ENCODE measurements at regions of chr7 and their contacts with region 1.

Region 1: GRCh38 chr7:47833211-47833610 is 115.1 kb downstream of the PKD1L1 start:
- DNase-seq: peak in 1 of 2 experiments; percentile 33
- H3K4me3 ChIP-seq: no peak overlapping the region
- H3K27ac ChIP-seq: no peak overlapping the region
- H3K4me1 ChIP-seq: no peaks in the 10 kb centered on the region; a peak in 1 of 7 replicates
- H3K27me3 ChIP-seq: no peaks in the 10 kb centered on the region; a peak in 1 of 7 replicates
- CTCF ChIP-seq: no peak
- EP300 ChIP-seq: no peak
- POLR2A ChIP-seq: no peak
- RAD21 ChIP-seq: no peak

Region 2: DNA sequence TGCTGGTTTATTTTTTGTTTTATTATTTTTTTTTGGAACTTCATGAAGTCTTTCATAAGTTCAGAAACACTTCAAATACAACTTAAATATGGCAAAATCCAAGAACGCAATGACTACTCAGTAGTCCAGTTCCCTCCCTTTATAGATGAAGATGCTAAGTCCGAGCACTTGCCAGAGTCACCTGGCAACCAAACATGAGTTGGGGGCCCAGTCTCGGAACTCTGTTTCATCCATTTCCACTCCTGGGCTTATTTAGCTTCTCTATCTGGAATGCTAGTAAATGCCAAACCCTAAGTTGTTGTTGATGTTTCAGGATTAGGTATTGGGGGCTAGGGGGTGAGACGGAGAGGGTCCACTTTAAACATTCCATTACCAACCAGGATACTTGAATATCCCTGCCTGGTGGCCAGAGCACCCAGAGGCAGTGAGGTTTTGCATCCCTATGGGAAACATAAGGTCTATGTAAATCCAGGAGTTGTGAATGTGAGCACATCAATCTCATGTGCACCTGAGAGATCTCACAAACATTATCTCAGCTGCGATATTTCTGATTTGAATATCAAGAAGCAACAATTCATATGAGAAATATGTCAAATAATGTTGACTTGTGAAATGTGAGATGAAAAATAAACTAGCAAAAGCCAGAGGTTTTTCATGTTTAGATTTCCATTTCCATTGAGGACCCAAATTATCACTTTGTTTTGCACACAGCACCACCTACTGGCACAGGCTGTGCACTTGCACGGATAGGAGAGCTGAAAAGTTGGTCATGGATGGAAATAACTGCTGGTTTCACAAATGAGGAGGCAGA is 14.2 kb before region 1 on chr7:
- CTCF ChIA-PET with region 1: interaction called, 40 read pairs
- POLR2A ChIA-PET with region 1: no interaction called
- DNase-seq: peak in 1 of 2 experiments; percentile 73
- H3K4me3 ChIP-seq: no peak overlapping the region
- H3K27ac ChIP-seq: no peak overlapping the region
- H3K4me1 ChIP-seq: peaks cover 0 to 5% (median 2%) of the 10 kb centered on the region in 4 experiments; a peak in 2 of 7 replicates
- H3K27me3 ChIP-seq: no peaks in the 10 kb centered on the region
- CTCF ChIP-seq: peak; percentile 69 to 97 (median 81)
- EP300 ChIP-seq: no peak
- POLR2A ChIP-seq: no peak
- RAD21 ChIP-seq: peak; percentile 92 to 93

Region 3: DNA sequence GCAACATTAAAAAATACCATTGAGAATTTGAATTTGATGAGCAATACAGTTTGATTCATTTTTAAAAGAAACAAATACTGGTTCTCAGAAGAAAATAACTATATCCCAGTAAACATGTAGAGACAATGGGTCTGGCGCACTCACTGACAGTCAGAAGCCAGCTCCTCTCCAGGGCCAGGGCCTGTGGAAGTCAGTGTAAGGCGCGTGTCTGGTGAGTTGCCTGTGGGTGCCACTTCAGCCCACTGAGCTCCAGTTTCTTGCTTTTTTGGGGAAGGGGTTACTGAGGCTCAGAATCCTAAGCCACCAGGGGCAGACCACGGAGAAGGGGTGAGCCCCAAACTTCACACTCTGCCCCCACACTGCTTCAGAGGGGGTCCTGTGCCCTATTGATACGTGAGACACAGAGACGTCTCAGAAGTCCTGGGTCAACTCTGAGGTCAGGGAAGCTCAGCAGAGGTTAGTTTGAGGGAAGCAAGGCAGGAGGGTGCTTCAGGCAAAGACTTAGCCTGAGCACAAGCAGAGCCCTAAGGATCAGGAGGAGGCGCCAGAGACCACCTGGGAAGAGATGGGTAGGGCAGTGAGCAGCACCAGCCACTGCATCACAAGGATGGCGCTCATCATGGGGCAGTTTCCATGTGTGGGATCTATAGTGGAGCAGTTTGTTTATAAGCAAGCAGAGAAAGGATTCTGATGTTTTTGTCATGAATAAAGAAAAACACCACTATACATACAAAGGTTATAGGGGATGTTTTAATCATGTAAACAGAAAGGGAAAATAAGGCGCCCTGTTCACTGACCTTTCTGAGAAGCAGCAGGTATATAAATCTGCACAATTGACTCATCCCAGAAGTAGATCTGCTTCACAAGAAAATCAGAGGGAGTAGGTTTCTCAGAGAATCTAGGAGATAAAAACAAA is 19.4 kb after region 1 on chr7:
- CTCF ChIA-PET with region 1: interaction called, 11 read pairs
- POLR2A ChIA-PET with region 1: no interaction called
- DNase-seq: peak in 1 of 2 experiments; percentile 52
- H3K4me3 ChIP-seq: no peak overlapping the region
- H3K27ac ChIP-seq: no peak overlapping the region
- H3K4me1 ChIP-seq: no peaks in the 10 kb centered on the region
- H3K27me3 ChIP-seq: no peaks in the 10 kb centered on the region
- CTCF ChIP-seq: peak; percentile 65 to 79 (median 73)
- EP300 ChIP-seq: no peak
- POLR2A ChIP-seq: no peak
- RAD21 ChIP-seq: peak; percentile 82 to 84

Measured in H1 (cell line).